ENCODE measurements at regions of chr6 and their contacts with region 1.

Region 1: GRCh38 chr6:3751730-3752542 is 423 bp upstream of the PXDC1 start:
- DNase-seq: no peak
- H3K4me3 ChIP-seq: peak overlapping the region; percentile 92
- CTCF ChIP-seq: peak; percentile 53

Region 2: GRCh38 chr6:3789018-3789895 is 37.3 kb after region 1 on chr6:
- CTCF ChIA-PET with region 1: no interaction called
- POLR2A ChIA-PET with region 1: no interaction called
- DNase-seq: no peak
- H3K4me3 ChIP-seq: no peak overlapping the region
- CTCF ChIP-seq: no peak

Region 3: DNA sequence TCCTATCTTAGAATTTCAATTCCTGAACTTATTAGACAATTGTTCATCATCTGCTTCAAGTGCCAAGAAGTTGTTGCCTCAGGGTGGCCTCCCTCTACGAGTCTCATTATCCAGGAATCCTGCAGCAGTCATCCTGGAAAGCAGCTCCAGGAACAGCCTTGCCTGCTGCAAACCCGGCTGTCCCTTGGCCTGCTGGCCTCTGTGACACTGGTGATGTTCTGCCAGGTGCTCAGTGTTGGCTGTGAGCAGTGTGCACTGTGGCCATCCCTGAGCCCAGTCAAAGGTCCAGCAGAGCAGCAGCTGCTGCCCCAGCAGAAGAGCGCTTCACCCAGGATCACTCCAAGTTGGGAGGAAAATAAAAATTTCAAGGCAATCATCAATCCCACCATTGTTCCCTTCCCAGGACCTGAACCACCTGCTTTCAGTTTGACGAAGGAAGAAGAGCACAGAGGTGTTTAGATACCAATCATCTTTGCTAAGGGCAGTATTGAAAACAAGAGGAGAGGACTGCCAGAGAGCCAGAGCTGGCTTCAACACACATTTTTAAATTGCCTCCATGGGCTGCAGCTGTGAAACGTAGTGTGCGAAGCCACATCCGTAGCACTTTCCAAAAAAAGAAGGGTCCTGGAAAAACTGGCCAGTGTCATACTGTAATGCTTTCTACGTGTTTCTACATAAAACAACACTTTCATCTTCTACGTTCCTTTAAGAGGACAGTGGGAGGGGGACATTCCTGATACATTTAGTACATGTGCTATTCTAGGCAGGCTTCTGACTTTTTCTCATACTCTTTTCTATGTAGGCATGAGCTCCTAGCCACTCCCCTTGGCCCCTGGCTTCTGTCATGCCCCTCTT is 90.0 kb after region 1 on chr6:
- CTCF ChIA-PET with region 1: interaction called, 66 read pairs
- POLR2A ChIA-PET with region 1: interaction called, 27 read pairs
- DNase-seq: peak; percentile 67
- H3K4me3 ChIP-seq: no peak overlapping the region
- CTCF ChIP-seq: no peak

Region 4: GRCh38 chr6:3887150-3887700 is 135.3 kb after region 1 on chr6:
- CTCF ChIA-PET with region 1: interaction called, 267 read pairs
- POLR2A ChIA-PET with region 1: interaction called, 13 read pairs
- DNase-seq: no peak
- H3K4me3 ChIP-seq: no peak overlapping the region
- CTCF ChIP-seq: peak; percentile 55

Region 5: GRCh38 chr6:3894590-3895311 is 142.8 kb after region 1 on chr6:
- CTCF ChIA-PET with region 1: interaction called, 267 read pairs
- POLR2A ChIA-PET with region 1: no interaction called
- DNase-seq: no peak
- H3K4me3 ChIP-seq: no peak overlapping the region
- CTCF ChIP-seq: no peak

Region 6: GRCh38 chr6:3929281-3929798 is 177.4 kb after region 1 on chr6:
- CTCF ChIA-PET with region 1: interaction called, 28 read pairs
- POLR2A ChIA-PET with region 1: no interaction called
- DNase-seq: peak; percentile 96
- H3K4me3 ChIP-seq: no peak overlapping the region
- CTCF ChIP-seq: no peak

Region 7: DNA sequence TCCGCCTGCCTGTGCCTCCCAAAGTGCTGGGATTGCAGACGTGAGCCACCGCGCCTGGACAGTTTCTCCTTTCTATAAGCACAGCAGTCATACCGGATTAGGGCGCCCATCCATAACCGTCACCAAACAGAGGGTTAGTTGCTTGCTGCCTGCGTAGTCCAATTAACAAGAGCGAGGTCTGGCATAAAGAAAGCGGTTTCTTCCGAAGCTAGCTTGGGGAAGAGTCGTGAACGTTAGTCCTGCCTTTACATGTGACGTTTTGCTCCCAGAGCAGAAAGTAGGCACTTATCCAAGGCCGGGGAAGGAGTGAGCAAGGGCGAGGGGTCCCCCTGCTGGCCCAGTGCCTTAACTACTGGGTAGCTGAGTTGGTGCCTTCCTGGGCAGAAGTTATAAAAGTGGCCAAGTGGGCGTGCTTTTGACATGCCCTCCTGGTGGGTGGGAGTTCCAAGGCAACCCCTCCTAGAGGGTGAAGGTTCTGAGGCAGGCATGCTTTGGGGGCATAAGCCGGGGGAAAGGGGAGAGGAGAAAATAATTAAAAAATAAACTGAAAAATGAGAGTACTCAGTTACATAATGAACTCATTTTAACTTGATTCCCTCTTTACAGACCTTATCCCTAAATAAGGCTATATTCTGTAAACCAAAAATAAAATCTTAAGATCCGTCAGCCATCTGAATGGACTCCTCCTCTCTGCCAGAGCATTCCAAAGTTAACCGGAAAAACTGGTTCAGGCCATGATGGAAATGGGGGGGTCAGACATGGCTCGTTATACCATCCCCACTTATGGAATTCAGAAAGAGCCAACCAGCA is 239.0 kb after region 1 on chr6:
- CTCF ChIA-PET with region 1: interaction called, 18 read pairs
- POLR2A ChIA-PET with region 1: no interaction called
- DNase-seq: peak; percentile 50
- H3K4me3 ChIP-seq: peak overlapping the region; percentile 23
- CTCF ChIP-seq: peak; percentile 94